Ovary (tissue), 10 donors: ENCODE measurements at regions of chr17 and their contacts with region 1.

Region 1: GRCh38 chr17:41665566-41666236 is 23.0 kb upstream of the EIF1 start:
- DNase-seq: peak; percentile 82 to 92 (median 86)
- H3K4me3 ChIP-seq: peak overlapping the region; percentile 40
- H3K27ac ChIP-seq: peak overlapping the region; percentile 38 to 42
- H3K4me1 ChIP-seq: no peaks in the 10 kb centered on the region
- H3K27me3 ChIP-seq: no peaks in the 10 kb centered on the region
- CTCF ChIP-seq: peak; percentile 94 to 97 (median 95)
- EP300 ChIP-seq: no peak
- POLR2A ChIP-seq: peak; percentile 44

Region 2: GRCh38 chr17:40803617-40804082 is 862.1 kb before region 1 on chr17:
- intact Hi-C with region 1: loop called (anchors 5 to 10 kb)
- DNase-seq: peak; percentile 40 to 80 (median 72)
- H3K4me3 ChIP-seq: no peak overlapping the region
- H3K27ac ChIP-seq: no peak overlapping the region
- H3K4me1 ChIP-seq: no peaks in the 10 kb centered on the region
- H3K27me3 ChIP-seq: no peaks in the 10 kb centered on the region
- CTCF ChIP-seq: peak in 2 of 3 donors; percentile 61 to 66
- EP300 ChIP-seq: no peak
- POLR2A ChIP-seq: no peak

Region 3: DNA sequence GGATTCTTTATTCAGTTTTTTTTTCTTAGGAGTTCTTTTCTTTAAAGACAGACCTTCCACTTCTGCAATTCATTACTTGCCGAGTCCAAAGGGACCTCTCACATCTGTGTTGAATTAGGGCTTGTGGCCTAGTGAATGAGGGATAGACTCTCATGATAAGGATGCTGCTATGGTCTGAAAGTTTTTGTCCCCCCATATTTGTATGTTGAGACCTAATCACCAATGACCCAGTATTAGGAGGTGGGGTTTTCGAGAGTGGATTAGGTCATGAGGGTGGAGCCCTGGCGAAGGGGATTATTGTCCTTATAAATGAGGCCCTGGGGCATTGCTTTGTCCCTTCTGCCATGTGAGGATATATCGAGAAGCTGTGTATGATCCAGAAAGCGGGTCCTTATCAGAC is 808.2 kb before region 1 on chr17:
- intact Hi-C with region 1: loop called in 1 of 4 experiments (anchors 5 kb)
- DNase-seq: no peak
- H3K4me3 ChIP-seq: no peak overlapping the region
- H3K27ac ChIP-seq: no peak overlapping the region
- H3K4me1 ChIP-seq: peaks cover 2% of the 10 kb centered on the region
- H3K27me3 ChIP-seq: no peaks in the 10 kb centered on the region
- CTCF ChIP-seq: no peak
- EP300 ChIP-seq: no peak
- POLR2A ChIP-seq: no peak